CD8-positive, alpha-beta memory T cell (primary cell): ENCODE measurements at regions of chr9 and their contacts with region 1.

Region 1: DNA sequence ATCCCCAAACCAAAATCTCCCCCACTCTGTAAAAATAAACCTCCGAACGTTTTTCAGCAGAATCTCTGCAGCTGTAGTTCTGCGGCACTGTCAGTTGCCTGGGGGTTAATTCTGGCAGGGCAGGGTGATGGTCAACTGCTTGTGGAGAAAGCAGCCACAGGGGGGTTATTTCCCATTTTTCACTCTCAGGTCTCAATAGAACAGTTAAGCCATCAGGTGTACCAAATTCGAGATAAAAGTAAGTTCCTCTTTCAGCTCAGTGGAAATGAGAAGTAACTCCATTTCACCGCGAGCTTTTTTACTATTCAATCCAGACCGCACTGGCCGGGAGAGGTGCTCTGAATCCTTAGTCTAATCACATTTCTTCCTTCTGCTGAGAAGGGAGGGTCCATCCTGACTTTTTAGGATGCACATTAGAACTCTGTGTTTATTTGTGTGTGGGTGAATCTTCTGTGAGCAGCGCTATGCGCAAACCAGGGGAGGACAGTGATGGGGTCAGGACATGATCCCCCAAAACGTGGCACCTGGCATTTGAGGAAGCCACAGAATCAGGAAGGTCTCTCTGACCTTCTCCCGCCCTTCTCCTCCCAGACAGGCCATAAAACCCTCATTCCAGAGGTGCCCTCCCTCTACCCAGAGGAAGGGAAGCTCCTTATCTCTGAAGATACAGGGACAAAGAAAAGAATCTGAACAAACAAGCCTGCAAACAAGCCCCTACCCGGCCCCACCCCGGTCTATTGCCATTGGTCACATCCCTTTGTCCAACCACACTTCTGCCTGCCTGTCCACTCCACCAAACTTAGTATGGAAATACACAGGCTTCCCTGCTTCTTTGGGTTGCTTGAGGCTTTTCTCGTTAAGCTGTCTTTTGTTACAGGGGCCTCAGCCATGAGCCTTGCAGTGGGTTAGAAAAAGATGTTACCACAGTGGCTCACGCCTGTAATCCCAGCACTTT is 229.0 kb downstream of the ROR2 start:
- DNase-seq: no peak
- H3K4me3 ChIP-seq: no peak overlapping the region
- H3K4me3 Mint-ChIP-seq: no peak overlapping the region
- H3K27ac ChIP-seq: no peak overlapping the region
- H3K27ac Mint-ChIP-seq: peak overlapping the region in 1 of 8 donors; percentile 3
- H3K4me1 ChIP-seq: no peaks in the 10 kb centered on the region
- H3K4me1 Mint-ChIP-seq: no peaks in the 10 kb centered on the region
- H3K27me3 ChIP-seq: no peaks in the 10 kb centered on the region
- H3K27me3 Mint-ChIP-seq: peaks cover 23 to 54% of the 10 kb centered on the region in 2 donors

Region 2: GRCh38 chr9:91734371-91734981 is 13.4 kb after region 1 on chr9:
- CTCF ChIA-PET with region 1: interaction called, 16 read pairs
- POLR2A ChIA-PET with region 1: no interaction called
- DNase-seq: peak in 4 of 5 donors; percentile 21 to 64 (median 51)
- H3K4me3 ChIP-seq: no peak overlapping the region
- H3K4me3 Mint-ChIP-seq: no peak overlapping the region
- H3K27ac ChIP-seq: no peak overlapping the region
- H3K27ac Mint-ChIP-seq: peak overlapping the region in 1 of 8 donors; percentile 12
- H3K4me1 ChIP-seq: no peaks in the 10 kb centered on the region
- H3K4me1 Mint-ChIP-seq: no peaks in the 10 kb centered on the region
- H3K27me3 ChIP-seq: no peaks in the 10 kb centered on the region
- H3K27me3 Mint-ChIP-seq: peaks cover 8 to 24% of the 10 kb centered on the region in 2 donors